GM10248 (cell line): ENCODE measurements at regions of chr2 and their contacts with region 1.

Region 1: DNA sequence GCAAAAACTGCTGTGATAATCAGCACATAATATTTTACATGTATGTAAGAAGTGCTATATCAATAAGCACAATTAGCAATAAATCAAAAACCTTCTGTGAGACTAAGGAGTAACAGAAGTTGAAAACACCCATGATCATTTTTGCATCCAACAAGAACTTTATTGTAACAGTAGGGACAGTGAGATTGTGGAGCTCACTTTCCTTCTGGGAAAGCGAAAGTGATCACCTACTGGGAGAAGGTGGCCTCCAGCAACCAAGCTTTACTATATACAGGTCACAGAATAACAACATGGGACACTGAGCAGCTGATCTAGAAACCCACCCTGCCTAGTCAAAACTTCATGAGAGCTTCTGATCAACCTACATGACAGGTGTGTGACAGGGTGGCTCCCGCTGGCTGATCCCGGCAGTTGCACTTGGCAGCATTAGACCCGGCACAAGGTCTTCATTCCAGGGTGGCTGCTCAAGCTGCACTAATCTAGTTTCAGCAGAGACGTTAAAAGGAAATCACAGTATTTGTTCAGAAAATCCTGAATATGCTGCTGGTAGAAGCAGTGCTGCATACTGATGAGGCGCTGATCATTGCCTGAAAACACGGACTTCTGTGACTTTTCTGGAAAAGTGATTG is 63.5 kb upstream of the ARL5A start:
- DNase-seq: no peak
- CTCF ChIP-seq: no peak

Region 2: GRCh38 chr2:151905963-151906632 is 14.4 kb after region 1 on chr2:
- CTCF ChIA-PET with region 1: interaction called, 11 read pairs
- POLR2A ChIA-PET with region 1: no interaction called
- DNase-seq: peak; percentile 18
- CTCF ChIP-seq: no peak